HCT116 (cell line): ENCODE measurements at regions of chr7 and their contacts with region 1.

Region 1: GRCh38 chr7:155380221-155380861 is 77.6 kb upstream of the EN2 start:
- DNase-seq: peak; percentile 62
- ATAC-seq: peak; percentile 99
- H3K4me3 ChIP-seq: no peak overlapping the region
- H3K27ac ChIP-seq: no peak overlapping the region
- H3K4me1 ChIP-seq: peaks cover 0 to 4% of the 10 kb centered on the region in 2 experiments; a peak in 2 of 4 replicates
- H3K27me3 ChIP-seq: peaks cover 27% of the 10 kb centered on the region
- CTCF ChIP-seq: peak; percentile 73 to 87 (median 75)
- POLR2A ChIP-seq: no peak
- RAD21 ChIP-seq: peak; percentile 82

Region 2: DNA sequence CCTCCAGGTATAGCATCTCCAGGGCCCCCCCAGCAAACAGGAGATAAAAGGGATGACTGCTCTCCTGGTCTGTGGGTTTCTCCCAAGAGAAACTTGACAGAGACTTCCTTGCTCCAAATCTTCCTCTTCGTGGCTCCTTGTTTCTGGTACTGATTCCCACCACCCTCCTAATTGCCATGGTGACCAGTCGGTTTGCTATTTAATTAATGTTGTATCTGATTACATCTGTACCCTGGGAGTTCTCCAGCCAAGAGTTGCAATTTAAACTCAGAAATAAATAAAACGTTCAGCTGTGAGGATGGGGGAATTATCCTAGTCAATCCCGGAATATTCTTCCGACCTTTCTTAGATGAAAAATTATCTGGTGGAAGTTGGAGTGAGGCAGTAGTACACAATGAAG is 642.1 kb before region 1 on chr7:
- CTCF ChIA-PET with region 1: no interaction called
- POLR2A ChIA-PET with region 1: no interaction called
- RAD21 ChIA-PET with region 1: no interaction called
- intact Hi-C with region 1: no loop called
- DNase-seq: no peak
- ATAC-seq: no peak
- H3K4me3 ChIP-seq: no peak overlapping the region
- H3K27ac ChIP-seq: no peak overlapping the region
- H3K4me1 ChIP-seq: no peaks in the 10 kb centered on the region
- H3K27me3 ChIP-seq: no peaks in the 10 kb centered on the region
- CTCF ChIP-seq: no peak
- POLR2A ChIP-seq: no peak
- RAD21 ChIP-seq: no peak

Region 3: GRCh38 chr7:155533827-155534690 is 153.7 kb after region 1 on chr7:
- CTCF ChIA-PET with region 1: no interaction called
- POLR2A ChIA-PET with region 1: no interaction called
- RAD21 ChIA-PET with region 1: no interaction called
- intact Hi-C with region 1: loop called (anchors 10 kb)
- DNase-seq: no peak
- ATAC-seq: peak; percentile 82
- H3K4me3 ChIP-seq: no peak overlapping the region
- H3K27ac ChIP-seq: no peak overlapping the region
- H3K4me1 ChIP-seq: no peaks in the 10 kb centered on the region
- H3K27me3 ChIP-seq: peaks cover 13% of the 10 kb centered on the region; the same call in 1 of the 2 replicates
- CTCF ChIP-seq: peak; percentile 29 to 70 (median 61); a peak in 4 of 6 replicates
- POLR2A ChIP-seq: no peak
- RAD21 ChIP-seq: peak; percentile 57

Region 4: GRCh38 chr7:155653803-155654202 is 273.5 kb after region 1 on chr7:
- CTCF ChIA-PET with region 1: no interaction called
- POLR2A ChIA-PET with region 1: no interaction called
- RAD21 ChIA-PET with region 1: no interaction called
- intact Hi-C with region 1: no loop called
- DNase-seq: no peak
- ATAC-seq: no peak
- H3K4me3 ChIP-seq: no peak overlapping the region
- H3K27ac ChIP-seq: no peak overlapping the region
- H3K4me1 ChIP-seq: no peaks in the 10 kb centered on the region
- H3K27me3 ChIP-seq: no peaks in the 10 kb centered on the region
- CTCF ChIP-seq: no peak
- POLR2A ChIP-seq: no peak
- RAD21 ChIP-seq: no peak

Region 5: GRCh38 chr7:155763691-155764437 is 383.5 kb after region 1 on chr7:
- CTCF ChIA-PET with region 1: interaction called, 8 read pairs
- POLR2A ChIA-PET with region 1: no interaction called
- RAD21 ChIA-PET with region 1: no interaction called
- intact Hi-C with region 1: loop called (anchors 1 kb)
- DNase-seq: no peak
- ATAC-seq: no peak
- H3K4me3 ChIP-seq: no peak overlapping the region
- H3K27ac ChIP-seq: no peak overlapping the region
- H3K4me1 ChIP-seq: no peaks in the 10 kb centered on the region
- H3K27me3 ChIP-seq: no peaks in the 10 kb centered on the region
- CTCF ChIP-seq: no peak
- POLR2A ChIP-seq: no peak
- RAD21 ChIP-seq: no peak